Heart right ventricle (tissue), 16 donors: ENCODE measurements at regions of chr4 and their contacts with region 1.

Region 1: GRCh38 chr4:81471588-81472288 is at the start of gene RASGEF1B:
- DNase-seq: peak; percentile 88 to 90
- ATAC-seq: peak; percentile 96 to 100 (median 97)
- H3K4me3 ChIP-seq: peak within 1 kb of the TSS; percentile 63 to 98 (median 88)
- H3K27ac ChIP-seq: peak within 1 kb of the TSS; percentile 66 to 91 (median 82)
- H3K4me1 ChIP-seq: peaks cover 0 to 49% (median 21%) of the 10 kb centered on the region in 9 donors
- H3K27me3 ChIP-seq: no peaks in the 10 kb centered on the region
- CTCF ChIP-seq: no peak
- total RNA-seq, gene RASGEF1B: 2.4 to 8.1 (median 3.4) TPM

Region 2: GRCh38 chr4:81405894-81406401 is 65.8 kb before region 1 on chr4:
- intact Hi-C with region 1: loop called in 3 of 10 experiments (anchors 5 to 10 kb)
- DNase-seq: peak in 1 of 2 donors; percentile 64
- ATAC-seq: peak in 7 of 8 donors; percentile 73 to 87 (median 79)
- H3K4me3 ChIP-seq: peak overlapping the region in 4 of 10 donors; percentile 4 to 26 (median 15)
- H3K27ac ChIP-seq: no peak overlapping the region
- H3K4me1 ChIP-seq: peaks cover 0 to 9% (median 0%) of the 10 kb centered on the region in 9 donors
- H3K27me3 ChIP-seq: no peaks in the 10 kb centered on the region
- CTCF ChIP-seq: peak; percentile 60 to 88 (median 82)

Region 3: GRCh38 chr4:81549984-81550383 is 78.2 kb after region 1 on chr4:
- intact Hi-C with region 1: loop called in 1 of 10 experiments (anchors 10 kb)
- DNase-seq: no peak
- ATAC-seq: peak in 5 of 8 donors; percentile 29 to 57 (median 37)
- H3K4me3 ChIP-seq: no peak overlapping the region
- H3K27ac ChIP-seq: peak overlapping the region in 3 of 10 donors; percentile 10 to 41 (median 11)
- H3K4me1 ChIP-seq: peaks cover 0 to 27% (median 3%) of the 10 kb centered on the region in 9 donors
- H3K27me3 ChIP-seq: no peaks in the 10 kb centered on the region
- CTCF ChIP-seq: no peak

Region 4: DNA sequence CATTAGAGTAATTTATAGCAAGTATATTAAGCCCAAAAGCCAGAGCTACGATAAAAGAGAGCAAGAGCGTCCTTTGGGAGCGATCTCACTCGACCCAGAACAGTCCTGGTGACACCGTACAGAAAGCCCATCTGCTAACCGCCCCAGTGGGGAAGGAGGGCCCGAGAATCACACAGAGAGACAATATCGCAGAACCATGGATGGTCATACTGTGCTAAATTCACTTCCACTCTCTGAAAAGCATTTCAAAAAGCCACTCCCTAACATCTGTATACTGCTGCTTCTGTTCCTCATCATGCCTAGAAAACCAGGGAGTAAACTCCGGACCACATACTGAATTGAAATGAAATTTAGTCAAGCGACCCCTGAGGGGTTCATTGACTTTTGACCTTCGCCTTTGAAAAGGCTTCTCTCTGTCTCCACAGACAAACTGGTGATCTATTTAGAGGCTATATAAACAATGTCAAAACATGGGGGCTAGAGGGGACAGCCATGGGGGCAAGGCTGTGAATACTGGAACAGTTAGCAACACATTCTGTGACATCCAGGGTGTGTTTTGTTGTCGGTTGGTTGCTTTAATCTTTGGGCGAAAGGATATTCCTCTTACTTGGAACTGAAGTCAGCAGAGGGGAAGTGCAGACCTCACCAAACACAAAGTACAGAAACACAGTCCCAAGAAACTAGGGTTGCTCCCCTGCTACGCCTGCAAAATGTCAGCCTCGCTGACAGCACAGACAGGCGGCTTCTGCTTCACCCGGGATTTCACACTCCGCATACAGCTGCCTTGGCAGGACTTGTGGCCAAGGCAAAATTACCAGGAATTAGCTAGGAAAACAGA is 129.0 kb after region 1 on chr4:
- intact Hi-C with region 1: loop called in 1 of 10 experiments (anchors 5 kb)
- DNase-seq: peak; percentile 53 to 76
- ATAC-seq: peak; percentile 87 to 97 (median 94)
- H3K4me3 ChIP-seq: peak overlapping the region in 1 of 10 donors; percentile 5
- H3K27ac ChIP-seq: peak overlapping the region in 6 of 10 donors; percentile 0 to 77 (median 70)
- H3K4me1 ChIP-seq: peaks cover 0 to 36% (median 12%) of the 10 kb centered on the region in 9 donors
- H3K27me3 ChIP-seq: no peaks in the 10 kb centered on the region
- CTCF ChIP-seq: peak in 1 of 9 donors; percentile 8

Region 5: DNA sequence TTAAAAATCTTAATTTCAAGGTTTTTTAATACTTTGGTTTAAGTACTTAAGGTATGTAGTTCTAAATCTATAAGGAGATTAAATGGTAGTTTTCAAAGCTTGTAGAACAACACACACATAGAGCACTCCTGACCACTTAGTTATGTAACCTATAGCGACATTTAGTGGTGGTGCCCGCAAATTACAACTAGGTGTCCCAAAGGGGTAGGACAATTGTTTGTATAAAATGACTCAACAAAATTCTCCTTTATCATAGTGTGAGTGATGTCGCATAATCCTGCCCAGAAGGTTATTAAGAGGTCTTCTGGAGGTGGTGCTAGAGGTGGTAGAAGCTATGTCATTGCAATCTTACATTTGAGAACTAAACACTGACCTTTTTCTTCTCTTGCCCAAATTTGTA is 373.0 kb after region 1 on chr4:
- intact Hi-C with region 1: loop called (anchors 1 to 5 kb)
- DNase-seq: peak in 1 of 2 donors; percentile 69
- ATAC-seq: peak; percentile 71 to 92 (median 87)
- H3K4me3 ChIP-seq: no peak overlapping the region
- H3K27ac ChIP-seq: no peak overlapping the region
- H3K4me1 ChIP-seq: peaks cover 0 to 10% (median 0%) of the 10 kb centered on the region in 9 donors
- H3K27me3 ChIP-seq: no peaks in the 10 kb centered on the region
- CTCF ChIP-seq: peak; percentile 62 to 90 (median 81)